HEK293 (cell line): ENCODE measurements at regions of chr7 and their contacts with region 1.

Region 1: GRCh38 chr7:144127703-144128334 is 4.8 kb downstream of the OR2A14 start:
- H3K4me3 ChIP-seq: no peak overlapping the region
- H3K27ac ChIP-seq: no peak overlapping the region
- H3K4me1 ChIP-seq: no peaks in the 10 kb centered on the region
- CTCF ChIP-seq: 0 out of 2 replicates have a peak, but pooled peaks have one; percentile 21

Region 2: DNA sequence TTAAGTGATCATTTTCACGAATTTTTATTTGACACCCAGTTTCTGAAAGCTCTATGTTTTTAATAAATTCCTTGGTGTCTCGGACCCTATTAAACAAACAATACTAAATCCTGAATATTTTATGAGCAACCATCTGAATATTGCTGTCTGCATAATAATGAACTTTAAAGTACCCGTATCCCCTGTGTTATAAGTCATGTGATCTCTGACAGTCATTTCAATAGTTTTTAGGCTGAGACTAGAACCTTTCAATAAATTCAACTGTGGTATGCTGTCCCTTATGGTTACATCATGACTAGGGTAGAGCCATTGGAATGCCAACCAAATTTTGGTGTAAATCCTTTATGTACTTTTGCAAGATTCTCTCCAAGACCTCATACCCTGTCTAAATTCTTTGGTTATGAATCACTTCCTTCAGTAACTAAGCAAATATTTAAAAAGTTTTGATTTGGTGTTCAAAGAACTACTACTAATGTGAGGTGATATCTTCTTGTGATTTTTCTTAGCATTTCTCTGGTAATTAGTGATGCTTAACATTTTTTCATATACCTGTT is 148.5 kb before region 1 on chr7:
- CTCF ChIA-PET with region 1: no interaction called
- POLR2A ChIA-PET with region 1: no interaction called
- H3K4me3 ChIP-seq: no peak overlapping the region
- H3K27ac ChIP-seq: no peak overlapping the region
- H3K4me1 ChIP-seq: no peaks in the 10 kb centered on the region
- CTCF ChIP-seq: no peak

Region 3: DNA sequence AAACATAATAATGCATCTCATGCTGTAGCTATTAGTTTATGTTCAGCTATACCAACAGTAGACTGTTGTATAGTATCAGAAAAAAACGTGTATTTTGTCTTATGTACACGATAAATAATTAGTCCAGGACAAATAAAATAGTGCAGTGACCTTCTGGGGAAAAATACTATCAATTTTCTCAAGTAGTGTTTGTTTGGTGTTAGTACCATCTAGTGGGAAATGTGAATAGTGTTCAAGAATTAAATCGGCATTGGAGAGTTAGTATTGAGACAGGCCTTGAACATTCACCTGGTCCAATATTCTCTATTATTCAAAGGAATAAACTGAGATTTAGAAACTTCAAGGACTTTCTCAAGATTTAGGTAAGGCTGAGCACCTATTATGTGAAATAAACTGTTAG is 100.7 kb before region 1 on chr7:
- CTCF ChIA-PET with region 1: interaction called, 13 read pairs
- POLR2A ChIA-PET with region 1: no interaction called
- H3K4me3 ChIP-seq: no peak overlapping the region
- H3K27ac ChIP-seq: no peak overlapping the region
- H3K4me1 ChIP-seq: no peaks in the 10 kb centered on the region
- CTCF ChIP-seq: peak; percentile 47; the same call in 1 of the 2 replicates